ENCODE measurements at regions of chr12 and their contacts with region 1.

Region 1: GRCh38 chr12:56900583-56900982 is 33.6 kb downstream of the SDR9C7 start:
- DNase-seq: peak; percentile 97
- H3K4me3 ChIP-seq: no peak overlapping the region
- H3K27ac ChIP-seq: peak overlapping the region; percentile 72
- H3K4me1 ChIP-seq: peaks cover 45% of the 10 kb centered on the region
- H3K27me3 ChIP-seq: no peaks in the 10 kb centered on the region
- CTCF ChIP-seq: peak in 1 of 2 donors; percentile 38

Region 2: DNA sequence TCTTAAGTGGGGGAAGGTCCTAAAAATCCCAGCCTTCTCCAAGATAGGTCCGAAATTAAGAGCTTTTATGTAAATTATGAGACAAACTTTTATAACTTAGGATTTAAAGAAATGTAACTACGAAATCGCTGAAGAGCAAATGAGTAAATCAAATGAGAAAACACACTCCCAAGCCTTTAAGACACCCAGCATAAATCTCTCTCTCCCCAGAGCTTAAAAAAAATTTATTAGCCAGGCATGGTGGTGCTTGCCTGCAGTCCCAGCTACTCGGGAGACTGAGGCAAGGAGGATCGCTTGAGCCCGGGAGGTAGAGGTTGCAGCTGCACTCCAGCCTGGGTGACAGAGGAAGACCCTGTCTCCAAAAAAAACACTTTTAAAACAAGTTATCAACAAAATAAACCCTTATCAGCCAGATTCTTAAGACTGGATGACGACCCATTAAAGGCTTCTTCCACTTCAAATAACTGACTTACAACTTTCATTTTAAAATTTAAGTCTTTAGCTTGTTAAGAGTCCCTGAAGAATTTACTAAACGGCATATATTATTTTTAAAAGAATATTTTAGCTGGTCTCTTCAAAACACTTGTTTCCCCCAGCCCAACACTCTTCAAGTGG is 215.7 kb before region 1 on chr12:
- CTCF ChIA-PET with region 1: no interaction called
- dilution Hi-C with region 1: no loop called
- in situ Hi-C with region 1: no loop called
- intact Hi-C with region 1: no loop called
- DNase-seq: no peak
- H3K4me3 ChIP-seq: peak overlapping the region; percentile 28 to 78 (median 59)
- H3K27ac ChIP-seq: peak overlapping the region; percentile 47
- H3K4me1 ChIP-seq: peaks cover 4% of the 10 kb centered on the region
- H3K27me3 ChIP-seq: no peaks in the 10 kb centered on the region
- CTCF ChIP-seq: no peak

Region 3: DNA sequence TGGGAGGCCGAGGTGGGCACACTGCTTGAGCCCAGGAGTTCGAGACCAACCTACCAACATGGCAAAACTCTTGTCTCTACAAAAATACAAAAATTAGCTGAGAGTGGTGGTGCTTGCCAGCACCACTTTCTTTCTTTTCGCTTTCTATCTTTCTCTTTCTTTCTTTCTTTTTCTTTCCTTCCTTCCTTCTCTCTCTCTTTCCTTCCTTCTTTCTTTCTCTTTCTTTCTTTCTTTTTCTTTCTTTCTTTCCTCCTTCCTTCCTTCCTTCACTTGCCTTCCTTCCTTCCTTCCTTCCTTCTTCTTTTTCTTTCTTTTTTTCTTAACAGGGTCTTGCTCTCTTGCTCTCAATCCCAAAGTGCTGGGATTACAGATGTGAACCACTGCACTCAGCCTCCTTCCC is 70.7 kb before region 1 on chr12:
- CTCF ChIA-PET with region 1: no interaction called
- dilution Hi-C with region 1: loop called (anchors 5 kb)
- in situ Hi-C with region 1: no loop called
- intact Hi-C with region 1: no loop called
- DNase-seq: no peak
- H3K4me3 ChIP-seq: no peak overlapping the region
- H3K27ac ChIP-seq: no peak overlapping the region
- H3K4me1 ChIP-seq: no peaks in the 10 kb centered on the region
- H3K27me3 ChIP-seq: no peaks in the 10 kb centered on the region
- CTCF ChIP-seq: no peak

Region 4: DNA sequence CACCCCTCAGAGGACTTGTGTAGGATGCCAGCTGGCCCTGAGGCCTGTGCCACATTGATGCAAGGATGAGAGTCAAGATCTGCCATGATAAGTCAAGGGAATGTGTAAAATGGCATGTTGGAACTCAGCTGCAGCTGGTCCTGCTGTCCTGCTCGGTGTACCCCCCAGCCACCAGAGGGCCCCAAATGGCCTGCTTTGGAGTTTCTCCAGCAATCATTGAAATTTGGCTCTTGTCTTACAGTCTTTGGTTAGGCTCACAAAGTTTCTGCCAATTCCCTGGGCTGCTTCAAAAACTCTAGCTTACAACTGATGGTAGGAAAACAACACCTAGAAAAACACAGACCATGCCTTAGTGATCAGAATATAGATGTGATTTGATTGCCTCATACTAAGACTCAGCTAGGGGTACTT is 60.7 kb before region 1 on chr12:
- CTCF ChIA-PET with region 1: interaction called, 8 read pairs
- dilution Hi-C with region 1: no loop called
- in situ Hi-C with region 1: no loop called
- intact Hi-C with region 1: loop called (anchors 1 kb)
- DNase-seq: peak; percentile 56
- H3K4me3 ChIP-seq: no peak overlapping the region
- H3K27ac ChIP-seq: no peak overlapping the region
- H3K4me1 ChIP-seq: peaks cover 34% of the 10 kb centered on the region
- H3K27me3 ChIP-seq: no peaks in the 10 kb centered on the region
- CTCF ChIP-seq: peak; percentile 77 to 85

Region 5: GRCh38 chr12:56941299-56942017 is 40.9 kb after region 1 on chr12:
- CTCF ChIA-PET with region 1: no interaction called
- dilution Hi-C with region 1: no loop called
- in situ Hi-C with region 1: no loop called
- intact Hi-C with region 1: loop called (anchors 2 kb)
- DNase-seq: peak; percentile 79
- H3K4me3 ChIP-seq: no peak overlapping the region
- H3K27ac ChIP-seq: peak overlapping the region; percentile 41
- H3K4me1 ChIP-seq: peaks cover 15% of the 10 kb centered on the region
- H3K27me3 ChIP-seq: no peaks in the 10 kb centered on the region
- CTCF ChIP-seq: peak in 1 of 2 donors; percentile 8

Measured in mammary epithelial cell (primary cell).